Naive thymus-derived CD4-positive, alpha-beta T cell (primary cell): ENCODE measurements at regions of chr5 and their contacts with region 1.

Region 1: GRCh38 chr5:79702606-79703382 is 13.2 kb downstream of the CMYA5 start:
- DNase-seq: peak in 7 of 9 donors; percentile 14 to 55 (median 52)
- ATAC-seq: peak; percentile 52
- H3K4me3 ChIP-seq: no peak overlapping the region
- H3K4me3 Mint-ChIP-seq: no peak overlapping the region
- H3K27ac ChIP-seq: no peak overlapping the region
- H3K27ac Mint-ChIP-seq: no peak overlapping the region
- H3K4me1 ChIP-seq: no peaks in the 10 kb centered on the region
- H3K4me1 Mint-ChIP-seq: peaks cover 0 to 17% (median 6%) of the 10 kb centered on the region in 7 donors
- H3K27me3 ChIP-seq: no peaks in the 10 kb centered on the region
- H3K27me3 Mint-ChIP-seq: no peaks in the 10 kb centered on the region

Region 2: GRCh38 chr5:79552984-79553383 is 149.8 kb before region 1 on chr5:
- CTCF ChIA-PET with region 1: no interaction called
- POLR2A ChIA-PET with region 1: no interaction called
- intact Hi-C with region 1: loop called in 1 of 2 experiments (anchors 5 kb)
- DNase-seq: peak in 6 of 9 donors; percentile 11 to 44 (median 30)
- ATAC-seq: peak; percentile 47
- H3K4me3 ChIP-seq: no peak overlapping the region
- H3K4me3 Mint-ChIP-seq: peak overlapping the region in 2 of 10 donors; percentile 2 to 12
- H3K27ac ChIP-seq: no peak overlapping the region
- H3K27ac Mint-ChIP-seq: peak overlapping the region in 5 of 9 donors; percentile 1 to 68 (median 23)
- H3K4me1 ChIP-seq: no peaks in the 10 kb centered on the region
- H3K4me1 Mint-ChIP-seq: peaks cover 3 to 22% (median 18%) of the 10 kb centered on the region in 7 donors
- H3K27me3 ChIP-seq: no peaks in the 10 kb centered on the region
- H3K27me3 Mint-ChIP-seq: no peaks in the 10 kb centered on the region

Region 3: GRCh38 chr5:79774171-79774854 is 71.5 kb after region 1 on chr5:
- CTCF ChIA-PET with region 1: interaction called, 3 read pairs
- POLR2A ChIA-PET with region 1: no interaction called
- intact Hi-C with region 1: loop called in 1 of 2 experiments (anchors 5 kb)
- DNase-seq: peak in 2 of 9 donors; percentile 1 to 4
- ATAC-seq: no peak
- H3K4me3 ChIP-seq: no peak overlapping the region
- H3K4me3 Mint-ChIP-seq: peak overlapping the region in 1 of 10 donors; percentile 63
- H3K27ac ChIP-seq: no peak overlapping the region
- H3K27ac Mint-ChIP-seq: peak overlapping the region in 1 of 9 donors; percentile 3
- H3K4me1 ChIP-seq: no peaks in the 10 kb centered on the region
- H3K4me1 Mint-ChIP-seq: no peaks in the 10 kb centered on the region
- H3K27me3 ChIP-seq: no peaks in the 10 kb centered on the region
- H3K27me3 Mint-ChIP-seq: peaks cover 0 to 4% (median 0%) of the 10 kb centered on the region in 5 donors

Region 4: GRCh38 chr5:79857714-79858409 is 155.1 kb after region 1 on chr5:
- CTCF ChIA-PET with region 1: no interaction called
- POLR2A ChIA-PET with region 1: no interaction called
- intact Hi-C with region 1: loop called (anchors 1 kb)
- DNase-seq: peak; percentile 39 to 83 (median 64)
- ATAC-seq: peak; percentile 79
- H3K4me3 ChIP-seq: no peak overlapping the region
- H3K4me3 Mint-ChIP-seq: no peak overlapping the region
- H3K27ac ChIP-seq: no peak overlapping the region
- H3K27ac Mint-ChIP-seq: no peak overlapping the region
- H3K4me1 ChIP-seq: no peaks in the 10 kb centered on the region
- H3K4me1 Mint-ChIP-seq: peaks cover 0 to 2% (median 0%) of the 10 kb centered on the region in 7 donors
- H3K27me3 ChIP-seq: no peaks in the 10 kb centered on the region
- H3K27me3 Mint-ChIP-seq: peaks cover 0 to 22% (median 0%) of the 10 kb centered on the region in 5 donors